Left lung (tissue), 14 donors: ENCODE measurements at regions of chr5 and their contacts with region 1.

Region 1: GRCh38 chr5:67246108-67246507 is 49.5 kb upstream of the CD180 start:
- DNase-seq: peak in 2 of 4 donors; percentile 77 to 85
- ATAC-seq: peak; percentile 82
- H3K4me3 ChIP-seq: no peak overlapping the region
- H3K27ac ChIP-seq: peak overlapping the region in 1 of 2 donors; percentile 13
- H3K4me1 ChIP-seq: peaks cover 5 to 38% of the 10 kb centered on the region in 2 donors
- H3K27me3 ChIP-seq: no peaks in the 10 kb centered on the region
- CTCF ChIP-seq: peak; percentile 58 to 70

Region 2: GRCh38 chr5:67395790-67396418 is 149.8 kb after region 1 on chr5:
- intact Hi-C with region 1: loop called in 1 of 2 experiments (anchors 10 kb)
- DNase-seq: no peak
- ATAC-seq: no peak
- H3K4me3 ChIP-seq: no peak overlapping the region
- H3K27ac ChIP-seq: no peak overlapping the region
- H3K4me1 ChIP-seq: no peaks in the 10 kb centered on the region
- H3K27me3 ChIP-seq: no peaks in the 10 kb centered on the region
- CTCF ChIP-seq: peak in 1 of 2 donors; percentile 10

Region 3: GRCh38 chr5:68252673-68253623 is 1006.8 kb after region 1 on chr5:
- intact Hi-C with region 1: loop called in 1 of 2 experiments (anchors 10 kb)
- DNase-seq: peak in 2 of 4 donors; percentile 45 to 75
- ATAC-seq: peak; percentile 79
- H3K4me3 ChIP-seq: no peak overlapping the region
- H3K27ac ChIP-seq: peak overlapping the region; percentile 25 to 61
- H3K4me1 ChIP-seq: peaks cover 51 to 91% of the 10 kb centered on the region in 2 donors
- H3K27me3 ChIP-seq: no peaks in the 10 kb centered on the region
- CTCF ChIP-seq: peak; percentile 48 to 52